Sciatic nerve (tissue), 2 donors: ENCODE measurements at regions of chr15 and their contacts with region 1.

Region 1: DNA sequence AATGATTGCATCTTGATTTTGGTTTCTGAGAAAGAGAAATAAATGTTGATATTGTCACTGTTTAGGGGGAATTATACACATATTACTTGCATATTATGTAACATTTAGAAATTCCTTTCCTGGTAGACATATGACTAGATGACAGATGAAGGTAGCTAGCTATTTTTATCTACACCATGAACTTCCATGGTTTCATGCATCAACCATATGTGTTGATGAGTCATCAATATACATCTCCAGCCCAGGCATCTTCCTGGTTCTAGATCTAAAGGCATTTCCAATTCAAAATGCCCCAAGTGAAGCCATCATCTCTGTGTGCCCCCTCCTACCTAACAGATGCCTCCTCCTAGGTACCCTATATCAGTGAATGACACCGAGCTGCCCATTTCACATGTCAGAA is 9.5 kb upstream of the ADAMTSL3 start:
- DNase-seq: no peak
- ATAC-seq: no peak

Region 2: DNA sequence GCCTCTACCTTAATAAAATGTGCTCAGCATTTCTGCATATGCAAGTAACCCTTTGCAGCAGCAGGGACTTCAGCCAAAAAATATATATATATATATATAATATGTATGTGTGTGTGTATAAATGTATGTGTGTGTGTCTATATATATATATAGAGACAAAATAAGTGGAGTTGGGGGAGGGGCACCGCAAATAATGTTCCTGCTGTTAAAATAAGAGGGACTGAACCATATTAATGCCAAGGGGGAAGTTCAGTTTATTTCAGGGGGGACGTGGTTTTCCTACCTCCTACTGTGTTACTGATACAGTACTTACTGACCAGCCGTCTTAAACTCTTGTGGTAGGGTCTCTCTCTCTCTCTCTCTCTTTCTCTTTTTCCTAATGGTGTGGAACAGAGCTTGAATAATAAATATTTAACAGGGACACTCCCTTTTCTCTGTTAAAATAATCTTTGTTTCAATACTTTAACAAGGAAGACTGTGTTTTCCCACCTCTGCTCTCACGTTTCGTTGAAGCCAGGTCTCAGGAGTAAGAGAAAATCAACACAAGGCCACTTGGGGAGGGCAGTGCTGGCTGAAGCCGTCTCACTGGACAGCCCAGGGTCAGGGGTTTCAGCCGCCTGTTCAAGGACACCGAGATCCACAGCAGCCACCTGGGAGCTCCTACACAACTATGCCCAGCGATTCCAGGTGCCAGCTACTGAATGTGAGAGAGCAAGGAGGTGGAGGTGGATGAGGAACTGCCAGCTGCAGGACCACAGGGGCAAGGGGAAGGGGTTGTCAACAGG is 33.3 kb before region 1 on chr15:
- intact Hi-C with region 1: loop called (anchors 1 kb)
- DNase-seq: no peak
- ATAC-seq: no peak

Region 3: DNA sequence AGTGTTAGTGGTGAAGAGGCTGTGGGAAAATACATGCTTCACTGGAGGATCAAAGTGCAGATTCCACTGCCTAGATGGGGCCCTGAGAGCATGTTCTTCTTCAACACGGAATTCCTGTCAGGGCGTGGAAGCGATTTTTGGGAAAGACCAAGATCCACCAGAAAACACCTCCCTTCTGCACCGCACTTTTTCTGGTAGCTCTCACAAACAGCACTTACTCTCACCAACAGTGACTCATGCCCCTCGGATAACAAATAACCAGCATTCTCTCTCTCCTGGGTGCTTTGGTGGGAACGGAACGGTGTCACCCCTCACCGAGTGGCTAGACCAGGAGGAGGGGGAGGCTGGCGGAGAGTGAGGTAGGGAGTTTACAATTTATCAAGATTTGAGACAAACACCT is 49.6 kb after region 1 on chr15:
- intact Hi-C with region 1: no loop called
- DNase-seq: no peak
- ATAC-seq: peak; percentile 63

Region 4: DNA sequence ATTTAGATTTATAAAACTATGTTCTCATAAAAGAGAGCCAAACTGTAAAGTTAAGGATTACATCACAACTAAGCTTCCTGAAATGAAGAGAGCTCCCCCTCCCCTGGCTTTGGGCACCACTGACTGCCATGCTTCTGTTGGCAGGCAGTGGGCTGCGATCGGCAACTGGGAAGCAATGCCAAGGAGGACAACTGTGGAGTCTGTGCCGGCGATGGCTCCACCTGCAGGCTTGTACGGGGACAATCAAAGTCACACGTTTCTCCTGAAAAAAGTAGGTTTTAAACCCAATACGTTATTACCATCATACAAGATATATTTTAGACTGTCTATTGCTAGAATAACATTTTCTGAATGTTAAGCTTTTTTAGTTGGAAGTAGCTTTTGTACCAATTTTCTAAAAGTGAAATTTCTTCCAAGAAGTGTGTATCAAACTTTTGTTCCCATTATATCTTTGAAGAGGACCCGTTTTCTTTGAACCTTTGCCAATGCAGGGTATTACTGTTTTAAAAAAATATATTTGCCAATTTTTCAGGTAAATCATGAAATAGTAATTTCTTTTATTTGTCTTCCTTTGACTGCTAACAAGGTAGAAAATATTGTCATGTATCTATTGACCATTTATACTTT is 193.6 kb after region 1 on chr15:
- intact Hi-C with region 1: no loop called
- DNase-seq: no peak
- ATAC-seq: peak; percentile 61